ENCODE measurements at regions of chr1 and their contacts with region 1.

Region 1: DNA sequence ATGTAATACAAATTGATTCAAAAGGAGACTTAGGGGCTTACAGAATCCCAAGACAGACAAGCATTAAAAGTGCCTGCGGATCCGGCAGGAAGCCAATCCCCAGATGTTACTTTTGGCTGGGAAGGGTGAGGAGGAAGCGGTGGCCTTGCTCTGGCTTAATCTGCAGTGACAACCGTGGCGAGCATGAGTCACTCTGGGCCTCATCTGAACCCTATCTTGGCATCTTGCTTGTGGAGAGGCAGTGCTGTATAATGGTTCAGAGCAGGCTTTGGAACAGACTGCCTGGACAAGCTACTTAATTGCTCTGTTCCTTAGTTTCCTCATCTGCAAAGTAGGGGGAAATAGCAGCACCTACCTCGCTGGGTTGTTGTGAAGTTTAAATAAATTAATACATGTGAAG is 74.1 kb downstream of the XCL2 start:
- DNase-seq: peak; percentile 89
- H3K4me3 ChIP-seq: no peak overlapping the region
- H3K27ac ChIP-seq: peak overlapping the region; percentile 19 to 64 (median 24)
- H3K4me1 ChIP-seq: peaks cover 0 to 56% (median 53%) of the 10 kb centered on the region in 4 donors
- H3K27me3 ChIP-seq: no peaks in the 10 kb centered on the region
- CTCF ChIP-seq: no peak
- EP300 ChIP-seq: no peak
- POLR2A ChIP-seq: no peak

Region 2: GRCh38 chr1:168430321-168430720 is 39.4 kb before region 1 on chr1:
- intact Hi-C with region 1: loop called (anchors 2 kb)
- DNase-seq: no peak
- H3K4me3 ChIP-seq: no peak overlapping the region
- H3K27ac ChIP-seq: peak overlapping the region; percentile 71 to 84 (median 77)
- H3K4me1 ChIP-seq: peaks cover 0 to 63% (median 55%) of the 10 kb centered on the region in 4 donors
- H3K27me3 ChIP-seq: no peaks in the 10 kb centered on the region
- CTCF ChIP-seq: no peak
- EP300 ChIP-seq: no peak
- POLR2A ChIP-seq: no peak

Region 3: GRCh38 chr1:168488138-168488537 is 18.4 kb after region 1 on chr1:
- intact Hi-C with region 1: loop called (anchors 1 kb)
- DNase-seq: peak; percentile 86
- H3K4me3 ChIP-seq: no peak overlapping the region
- H3K27ac ChIP-seq: peak overlapping the region; percentile 42 to 66 (median 54)
- H3K4me1 ChIP-seq: peaks cover 0 to 80% (median 72%) of the 10 kb centered on the region in 4 donors
- H3K27me3 ChIP-seq: no peaks in the 10 kb centered on the region
- CTCF ChIP-seq: no peak
- EP300 ChIP-seq: no peak
- POLR2A ChIP-seq: no peak